Caco-2 (cell line): ENCODE measurements at regions of chr17 and their contacts with region 1.

Region 1: DNA sequence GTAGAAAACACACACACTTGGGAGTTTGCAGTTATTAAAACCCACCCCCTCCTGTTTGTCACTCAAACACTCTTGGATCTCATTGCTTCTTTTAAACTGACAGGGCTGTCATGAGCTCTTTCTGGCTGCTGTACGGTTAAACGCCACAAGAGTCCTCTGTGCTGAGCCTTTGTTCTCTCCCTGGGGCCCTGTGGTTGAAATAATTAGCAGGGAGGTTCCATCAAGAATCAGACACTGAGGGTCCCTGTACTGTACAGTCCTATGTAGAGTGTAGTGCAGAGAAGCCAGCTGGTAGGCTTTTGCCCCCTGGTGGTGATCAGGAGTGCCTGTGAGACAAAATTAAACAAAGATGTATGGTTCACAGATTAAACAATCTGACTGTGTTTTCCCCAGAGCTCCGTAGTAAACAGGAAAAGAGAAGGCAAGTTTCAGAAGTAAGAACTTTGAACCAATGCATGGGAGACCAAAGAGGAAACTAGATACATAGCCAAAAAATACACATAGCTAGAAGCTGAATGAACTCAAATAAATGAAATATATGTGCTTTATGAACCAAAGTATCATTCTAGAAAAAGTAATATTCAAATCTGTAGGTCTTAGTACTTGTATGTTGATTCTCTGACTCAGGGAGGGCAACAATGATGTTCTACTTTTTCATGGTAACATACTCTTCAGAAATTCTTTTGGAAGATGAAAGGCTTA is 1.4 kb upstream of the SSH2 start:
- DNase-seq: peak; percentile 76 to 78
- H3K4me3 ChIP-seq: peak overlapping the region; percentile 91
- H3K4me3 Mint-ChIP-seq: no peak overlapping the region
- H3K27ac Mint-ChIP-seq: no peak overlapping the region
- H3K4me1 ChIP-seq: peaks cover 13% of the 10 kb centered on the region
- H3K4me1 Mint-ChIP-seq: peaks cover 12% of the 10 kb centered on the region
- H3K27me3 ChIP-seq: no peaks in the 10 kb centered on the region
- H3K27me3 Mint-ChIP-seq: peaks cover 2% of the 10 kb centered on the region
- CTCF ChIP-seq: peak; percentile 86 to 95

Region 2: DNA sequence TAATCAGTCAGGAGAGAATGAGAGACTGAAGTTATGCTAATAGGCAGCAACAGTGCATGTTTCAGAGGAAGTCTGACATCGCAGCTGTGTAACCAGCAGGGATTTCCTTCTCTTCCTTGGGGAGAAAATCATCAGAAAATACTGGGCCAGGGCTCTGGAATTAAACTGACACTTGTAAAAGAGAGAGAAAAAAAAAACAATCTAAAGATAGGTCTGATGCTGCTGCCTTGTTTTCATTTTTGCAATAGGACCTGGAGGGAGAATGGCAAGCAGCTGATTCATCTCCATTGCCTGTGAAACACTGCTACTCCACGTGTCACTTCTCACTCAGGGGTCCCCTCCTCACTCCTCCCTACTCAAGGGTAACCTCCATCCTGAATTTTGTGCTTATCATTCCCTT is 291.0 kb before region 1 on chr17:
- CTCF ChIA-PET with region 1: interaction called, 41 read pairs
- POLR2A ChIA-PET with region 1: no interaction called
- intact Hi-C with region 1: loop called (anchors 1 kb)
- DNase-seq: no peak
- H3K4me3 ChIP-seq: no peak overlapping the region
- H3K4me3 Mint-ChIP-seq: no peak overlapping the region
- H3K27ac Mint-ChIP-seq: peak overlapping the region; percentile 7
- H3K4me1 ChIP-seq: peaks cover 13% of the 10 kb centered on the region
- H3K4me1 Mint-ChIP-seq: no peaks in the 10 kb centered on the region
- H3K27me3 ChIP-seq: no peaks in the 10 kb centered on the region
- H3K27me3 Mint-ChIP-seq: no peaks in the 10 kb centered on the region
- CTCF ChIP-seq: no peak

Region 3: DNA sequence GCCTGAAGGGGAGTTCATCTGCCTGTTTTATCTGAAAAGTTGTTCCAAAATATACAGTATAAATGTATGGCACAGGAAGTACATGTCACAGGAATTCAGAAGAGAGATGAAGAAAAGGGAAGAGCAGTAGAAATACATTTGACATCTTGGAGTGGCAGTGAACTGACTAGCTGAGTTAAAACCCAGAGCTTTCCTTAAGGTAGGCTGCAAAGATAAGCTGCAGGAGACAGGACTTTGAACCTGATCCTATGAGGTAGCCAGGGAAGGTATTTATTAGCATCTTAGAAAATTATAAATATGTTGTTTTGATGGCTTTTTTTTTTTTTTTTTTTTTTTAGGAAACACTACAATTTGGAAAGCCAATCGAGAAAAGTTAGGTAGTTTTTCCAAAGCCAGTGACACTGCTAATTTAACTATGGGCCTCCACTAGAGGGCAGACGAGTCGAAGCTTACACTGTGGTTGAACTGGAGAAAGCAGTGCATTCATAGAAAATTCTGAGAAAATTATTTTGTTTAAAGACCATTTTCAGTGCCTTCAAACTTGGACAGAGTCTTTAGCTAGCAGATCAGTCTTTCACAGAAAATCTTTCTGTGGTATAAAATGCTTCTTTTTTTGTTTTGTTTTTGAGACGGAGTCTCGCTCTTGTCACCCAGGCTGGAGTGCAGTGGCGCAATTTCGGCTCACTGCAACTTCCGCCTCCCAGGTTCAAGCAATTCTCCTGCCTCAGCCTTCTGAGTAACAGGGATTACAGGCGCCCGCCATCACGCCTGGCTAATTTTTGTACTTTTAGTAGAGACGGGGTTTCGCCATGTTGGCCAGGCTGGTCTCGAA is 123.6 kb before region 1 on chr17:
- CTCF ChIA-PET with region 1: interaction called, 60 read pairs
- POLR2A ChIA-PET with region 1: interaction called, 12 read pairs
- intact Hi-C with region 1: loop called (anchors 1 kb)
- DNase-seq: peak; percentile 70 to 80
- H3K4me3 ChIP-seq: no peak overlapping the region
- H3K4me3 Mint-ChIP-seq: no peak overlapping the region
- H3K27ac Mint-ChIP-seq: no peak overlapping the region
- H3K4me1 ChIP-seq: no peaks in the 10 kb centered on the region
- H3K4me1 Mint-ChIP-seq: no peaks in the 10 kb centered on the region
- H3K27me3 ChIP-seq: no peaks in the 10 kb centered on the region
- H3K27me3 Mint-ChIP-seq: no peaks in the 10 kb centered on the region
- CTCF ChIP-seq: peak; percentile 85 to 87

Region 4: GRCh38 chr17:29844339-29845048 is 86.9 kb before region 1 on chr17:
- CTCF ChIA-PET with region 1: interaction called, 16 read pairs
- POLR2A ChIA-PET with region 1: interaction called, 17 read pairs
- intact Hi-C with region 1: no loop called
- DNase-seq: no peak
- H3K4me3 ChIP-seq: no peak overlapping the region
- H3K4me3 Mint-ChIP-seq: no peak overlapping the region
- H3K27ac Mint-ChIP-seq: no peak overlapping the region
- H3K4me1 ChIP-seq: peaks cover 21% of the 10 kb centered on the region
- H3K4me1 Mint-ChIP-seq: peaks cover 12% of the 10 kb centered on the region
- H3K27me3 ChIP-seq: no peaks in the 10 kb centered on the region
- H3K27me3 Mint-ChIP-seq: no peaks in the 10 kb centered on the region
- CTCF ChIP-seq: no peak

Region 5: GRCh38 chr17:29867643-29868181 is 63.7 kb before region 1 on chr17:
- CTCF ChIA-PET with region 1: interaction called, 59 read pairs
- POLR2A ChIA-PET with region 1: interaction called, 4 read pairs
- intact Hi-C with region 1: loop called (anchors 1 kb)
- DNase-seq: no peak
- H3K4me3 ChIP-seq: no peak overlapping the region
- H3K4me3 Mint-ChIP-seq: no peak overlapping the region
- H3K27ac Mint-ChIP-seq: no peak overlapping the region
- H3K4me1 ChIP-seq: no peaks in the 10 kb centered on the region
- H3K4me1 Mint-ChIP-seq: no peaks in the 10 kb centered on the region
- H3K27me3 ChIP-seq: no peaks in the 10 kb centered on the region
- H3K27me3 Mint-ChIP-seq: no peaks in the 10 kb centered on the region
- CTCF ChIP-seq: peak; percentile 21 to 44

Region 6: GRCh38 chr17:29958947-29959657 is 27.7 kb after region 1 on chr17:
- CTCF ChIA-PET with region 1: no interaction called
- POLR2A ChIA-PET with region 1: no interaction called
- intact Hi-C with region 1: no loop called
- DNase-seq: no peak
- H3K4me3 ChIP-seq: no peak overlapping the region
- H3K4me3 Mint-ChIP-seq: no peak overlapping the region
- H3K27ac Mint-ChIP-seq: no peak overlapping the region
- H3K4me1 ChIP-seq: no peaks in the 10 kb centered on the region
- H3K4me1 Mint-ChIP-seq: no peaks in the 10 kb centered on the region
- H3K27me3 ChIP-seq: no peaks in the 10 kb centered on the region
- H3K27me3 Mint-ChIP-seq: no peaks in the 10 kb centered on the region
- CTCF ChIP-seq: no peak

Region 7: GRCh38 chr17:30021708-30022317 is 90.4 kb after region 1 on chr17:
- CTCF ChIA-PET with region 1: interaction called, 10 read pairs
- POLR2A ChIA-PET with region 1: no interaction called
- intact Hi-C with region 1: loop called (anchors 1 kb)
- DNase-seq: peak in 1 of 2 experiments; percentile 50
- H3K4me3 ChIP-seq: no peak overlapping the region
- H3K4me3 Mint-ChIP-seq: no peak overlapping the region
- H3K27ac Mint-ChIP-seq: no peak overlapping the region
- H3K4me1 ChIP-seq: no peaks in the 10 kb centered on the region
- H3K4me1 Mint-ChIP-seq: no peaks in the 10 kb centered on the region
- H3K27me3 ChIP-seq: no peaks in the 10 kb centered on the region
- H3K27me3 Mint-ChIP-seq: peaks cover 7% of the 10 kb centered on the region
- CTCF ChIP-seq: peak; percentile 60 to 85

Region 8: GRCh38 chr17:30104575-30105339 is 173.4 kb after region 1 on chr17:
- CTCF ChIA-PET with region 1: interaction called, 14 read pairs
- POLR2A ChIA-PET with region 1: no interaction called
- intact Hi-C with region 1: no loop called
- DNase-seq: peak; percentile 86 to 90
- H3K4me3 ChIP-seq: peak overlapping the region; percentile 42
- H3K4me3 Mint-ChIP-seq: peak overlapping the region; percentile 73
- H3K27ac Mint-ChIP-seq: peak overlapping the region; percentile 80
- H3K4me1 ChIP-seq: no peaks in the 10 kb centered on the region
- H3K4me1 Mint-ChIP-seq: peaks cover 7% of the 10 kb centered on the region
- H3K27me3 ChIP-seq: no peaks in the 10 kb centered on the region
- H3K27me3 Mint-ChIP-seq: no peaks in the 10 kb centered on the region
- CTCF ChIP-seq: peak; percentile 94 to 97

Region 9: GRCh38 chr17:30696234-30696633 is 764.9 kb after region 1 on chr17:
- CTCF ChIA-PET with region 1: no interaction called
- POLR2A ChIA-PET with region 1: no interaction called
- intact Hi-C with region 1: no loop called
- DNase-seq: no peak
- H3K4me3 ChIP-seq: no peak overlapping the region
- H3K4me3 Mint-ChIP-seq: no peak overlapping the region
- H3K27ac Mint-ChIP-seq: no peak overlapping the region
- H3K4me1 ChIP-seq: peaks cover 18% of the 10 kb centered on the region
- H3K4me1 Mint-ChIP-seq: peaks cover 16% of the 10 kb centered on the region
- H3K27me3 ChIP-seq: no peaks in the 10 kb centered on the region
- H3K27me3 Mint-ChIP-seq: no peaks in the 10 kb centered on the region
- CTCF ChIP-seq: no peak